ENCODE measurements at regions of chr10 and their contacts with region 1.

Region 1: GRCh38 chr10:95864906-95865813 is 42.6 kb upstream of the CC2D2B start:
- DNase-seq: peak; percentile 63 to 87 (median 84)
- H3K4me3 ChIP-seq: no peak overlapping the region
- H3K27ac ChIP-seq: no peak overlapping the region
- H3K4me1 ChIP-seq: peaks cover 0 to 14% (median 0%) of the 10 kb centered on the region in 4 experiments
- H3K27me3 ChIP-seq: no peaks in the 10 kb centered on the region

Region 2: GRCh38 chr10:95848841-95849240 is 16.3 kb before region 1 on chr10:
- CTCF ChIA-PET with region 1: interaction called, 60 read pairs
- POLR2A ChIA-PET with region 1: no interaction called
- DNase-seq: no peak
- H3K4me3 ChIP-seq: no peak overlapping the region
- H3K27ac ChIP-seq: no peak overlapping the region
- H3K4me1 ChIP-seq: peaks cover 0 to 2% (median 0%) of the 10 kb centered on the region in 4 experiments
- H3K27me3 ChIP-seq: no peaks in the 10 kb centered on the region

Region 3: DNA sequence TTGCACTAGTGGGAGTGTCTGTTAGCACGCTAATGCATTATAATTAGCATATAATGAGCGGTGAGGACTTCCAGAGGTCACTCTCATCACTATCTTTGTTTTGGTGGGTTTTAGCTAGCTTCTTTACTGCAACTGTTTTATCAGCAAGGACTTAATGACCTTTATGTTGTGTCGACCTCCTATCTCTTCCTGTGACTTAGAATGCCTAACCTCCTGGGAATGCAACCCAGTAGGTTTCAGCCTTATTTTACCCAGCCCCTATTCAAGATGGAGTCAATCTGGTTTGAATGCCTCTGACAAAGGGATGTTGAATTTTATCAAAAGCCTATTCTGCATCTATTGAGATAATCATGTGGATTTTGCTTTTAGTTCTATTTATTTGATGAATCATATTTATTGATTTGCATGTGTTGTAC is 242.5 kb after region 1 on chr10:
- CTCF ChIA-PET with region 1: no interaction called
- POLR2A ChIA-PET with region 1: no interaction called
- DNase-seq: no peak
- H3K4me3 ChIP-seq: no peak overlapping the region
- H3K27ac ChIP-seq: no peak overlapping the region
- H3K4me1 ChIP-seq: no peaks in the 10 kb centered on the region
- H3K27me3 ChIP-seq: peaks cover 1 to 49% (median 14%) of the 10 kb centered on the region in 5 experiments